Left lung (tissue), 14 donors: ENCODE measurements at regions of chr6 and their contacts with region 1.

Region 1: DNA sequence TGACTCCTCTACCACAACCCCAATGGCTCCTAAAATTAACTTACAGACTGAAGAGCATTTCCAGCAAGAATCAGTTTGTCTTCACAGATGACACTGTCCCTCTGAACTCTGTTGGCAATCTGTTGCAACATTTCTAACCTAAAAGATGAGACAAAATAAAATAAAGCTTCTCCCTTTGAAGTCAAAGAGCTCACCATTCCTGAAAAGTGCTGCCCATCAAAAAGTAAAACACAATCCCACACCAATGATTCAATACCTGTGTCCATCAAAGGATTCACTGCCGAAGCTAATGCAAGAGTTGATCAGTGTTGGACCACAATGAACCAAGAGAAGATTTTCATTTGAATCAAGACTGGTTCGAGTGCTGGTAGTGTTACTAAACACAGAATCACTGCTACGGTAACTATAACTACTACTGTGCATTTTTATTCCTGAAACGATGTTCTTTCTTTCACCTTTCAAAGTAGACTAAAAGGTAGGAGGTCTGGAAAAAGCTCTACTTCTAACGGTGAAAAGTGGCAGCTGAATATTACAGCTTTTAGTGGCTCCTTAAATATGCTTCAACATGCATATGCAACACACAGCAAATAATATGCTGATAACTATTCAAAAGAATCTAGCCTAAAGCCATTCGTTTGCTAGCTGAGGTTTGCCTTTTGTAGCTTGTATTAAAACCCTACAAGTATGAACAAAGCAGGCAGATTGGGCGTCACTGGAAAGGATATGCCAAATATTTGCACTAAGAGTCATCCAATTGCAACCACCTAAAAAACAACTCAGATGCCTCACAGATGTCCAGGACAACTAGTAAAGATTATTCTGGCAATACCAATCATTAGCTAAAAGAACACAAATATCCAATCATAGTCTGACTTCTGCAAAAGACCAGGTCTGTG is at the start of gene DST:
- DNase-seq: no peak
- ATAC-seq: peak; percentile 39
- H3K4me3 ChIP-seq: no peak within 1 kb of the TSS
- H3K27ac ChIP-seq: no peak within 1 kb of the TSS
- H3K4me1 ChIP-seq: no peaks in the 10 kb centered on the region
- H3K27me3 ChIP-seq: no peaks in the 10 kb centered on the region
- CTCF ChIP-seq: no peak
- polyA plus RNA-seq, gene DST: 453 to 636 (median 536) TPM

Region 2: GRCh38 chr6:56699066-56699654 is 56.5 kb after region 1 on chr6:
- intact Hi-C with region 1: loop called in 1 of 2 experiments (anchors 10 kb)
- DNase-seq: peak in 2 of 4 donors; percentile 34 to 39
- ATAC-seq: peak; percentile 81
- H3K4me3 ChIP-seq: no peak overlapping the region
- H3K27ac ChIP-seq: no peak overlapping the region
- H3K4me1 ChIP-seq: no peaks in the 10 kb centered on the region
- H3K27me3 ChIP-seq: no peaks in the 10 kb centered on the region
- CTCF ChIP-seq: peak; percentile 49